Activated CD4-positive, alpha-beta T cell treated with anti-CD3 and anti-CD28 coated beads for 36 hours (primary cell): ENCODE measurements at regions of chr1 and their contacts with region 1.

Region 1: GRCh38 chr1:9910425-9911178 is 533 bp upstream of the CTNNBIP1 start:
- DNase-seq: peak; percentile 100
- ATAC-seq: peak; percentile 96
- H3K4me3 Mint-ChIP-seq: peak overlapping the region; percentile 82
- H3K27ac Mint-ChIP-seq: peak overlapping the region; percentile 92
- H3K4me1 Mint-ChIP-seq: peaks cover 23% of the 10 kb centered on the region
- H3K27me3 Mint-ChIP-seq: no peaks in the 10 kb centered on the region

Region 2: DNA sequence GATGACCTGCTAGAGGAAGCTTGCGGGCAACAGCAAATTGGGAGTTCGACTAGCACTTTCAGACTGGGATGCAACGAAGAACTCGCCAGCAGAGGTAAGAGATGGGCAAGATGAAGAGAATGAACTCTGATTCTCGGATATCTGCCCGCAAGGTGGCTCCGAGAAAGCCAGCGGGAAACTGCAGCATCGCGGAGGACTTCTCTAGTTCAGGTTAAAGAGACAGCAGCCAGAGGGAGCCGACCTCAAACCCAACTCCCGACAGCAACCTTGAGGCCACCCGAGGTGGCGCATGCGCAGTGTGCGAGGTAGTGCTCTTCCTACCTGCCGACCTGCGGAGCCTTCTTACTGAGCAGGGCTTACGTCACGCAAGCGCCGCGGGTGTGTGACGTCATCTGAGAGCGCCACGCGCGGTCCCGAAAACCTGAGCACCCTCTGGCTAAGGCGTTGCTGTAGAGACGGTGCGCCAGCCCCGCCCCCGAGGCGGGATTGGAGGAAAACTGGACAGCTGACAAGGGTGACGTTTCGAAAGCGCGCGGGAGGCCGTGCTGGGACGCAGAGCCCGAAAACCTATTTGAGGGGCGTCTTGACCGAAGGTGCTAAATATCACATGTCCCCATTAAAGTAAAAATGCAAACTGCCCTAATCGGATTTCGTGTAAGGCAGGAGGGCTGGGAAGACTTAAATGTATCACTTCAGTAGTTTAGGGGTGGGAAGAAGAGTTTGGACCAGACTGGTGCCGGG is 481.8 kb before region 1 on chr1:
- CTCF ChIA-PET with region 1: no interaction called
- POLR2A ChIA-PET with region 1: no interaction called
- intact Hi-C with region 1: loop called in 1 of 2 experiments (anchors 1 kb)
- DNase-seq: peak; percentile 100
- ATAC-seq: peak; percentile 91
- H3K4me3 Mint-ChIP-seq: peak overlapping the region; percentile 86
- H3K27ac Mint-ChIP-seq: peak overlapping the region; percentile 98
- H3K4me1 Mint-ChIP-seq: peaks cover 47% of the 10 kb centered on the region
- H3K27me3 Mint-ChIP-seq: no peaks in the 10 kb centered on the region

Region 3: DNA sequence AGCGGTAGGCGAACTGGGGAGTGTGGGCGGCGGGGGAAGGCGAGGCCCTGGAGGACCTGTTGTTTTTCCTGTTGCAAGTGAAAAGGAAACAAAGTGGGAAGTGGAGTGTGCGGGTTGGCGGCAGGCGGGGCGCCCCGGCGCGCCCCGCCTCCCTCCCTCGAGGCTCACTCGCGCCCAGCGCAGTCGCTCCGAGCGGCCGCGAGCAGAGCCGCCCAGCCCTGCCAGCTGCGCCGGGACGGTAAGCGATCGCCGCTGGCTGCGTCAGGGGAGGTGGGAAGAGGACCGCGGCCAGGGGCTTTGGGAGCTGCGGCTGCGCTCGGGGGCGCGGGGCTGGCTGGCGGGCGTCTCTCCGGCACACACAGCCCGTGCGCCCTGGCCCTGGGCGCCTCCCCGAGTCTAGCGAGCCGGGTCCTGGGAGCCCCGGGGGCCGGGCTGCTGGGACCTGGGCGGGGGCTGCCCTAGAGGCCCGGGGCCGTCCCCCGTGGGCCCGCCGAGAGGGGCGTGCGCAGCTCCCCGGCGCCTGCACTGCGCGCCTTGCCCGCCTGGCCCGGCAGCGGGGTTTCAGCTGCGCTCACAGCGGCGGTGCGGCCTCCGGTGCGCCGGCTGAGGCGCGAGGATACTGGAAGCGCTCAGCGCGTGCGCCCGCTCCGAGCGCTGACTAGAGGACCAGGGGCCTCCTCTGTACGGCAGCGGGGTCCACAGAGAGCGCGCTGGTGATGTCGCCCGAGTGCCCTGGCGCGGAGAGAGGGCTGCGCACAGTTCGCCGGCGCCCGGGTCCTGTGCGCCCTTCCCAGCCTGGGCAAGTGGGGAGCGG is 258.8 kb before region 1 on chr1 and contains the start of gene PIK3CD:
- CTCF ChIA-PET with region 1: no interaction called
- POLR2A ChIA-PET with region 1: no interaction called
- intact Hi-C with region 1: loop called in 1 of 2 experiments (anchors 1 kb)
- DNase-seq: peak; percentile 69
- ATAC-seq: peak; percentile 24
- H3K4me3 Mint-ChIP-seq: peak within 1 kb of the TSS; percentile 98
- H3K27ac Mint-ChIP-seq: peak within 1 kb of the TSS; percentile 99
- H3K4me1 Mint-ChIP-seq: peaks cover 51% of the 10 kb centered on the region
- H3K27me3 Mint-ChIP-seq: no peaks in the 10 kb centered on the region
- total RNA-seq, gene PIK3CD: 96.4 to 114 TPM

Region 4: GRCh38 chr1:9874959-9875635 is 35.5 kb before region 1 on chr1:
- CTCF ChIA-PET with region 1: interaction called, 12 read pairs
- POLR2A ChIA-PET with region 1: no interaction called
- intact Hi-C with region 1: loop called (anchors 1 to 5 kb)
- DNase-seq: peak; percentile 86
- ATAC-seq: peak; percentile 96
- H3K4me3 Mint-ChIP-seq: no peak overlapping the region
- H3K27ac Mint-ChIP-seq: no peak overlapping the region
- H3K4me1 Mint-ChIP-seq: peaks cover 3% of the 10 kb centered on the region
- H3K27me3 Mint-ChIP-seq: no peaks in the 10 kb centered on the region

Region 5: DNA sequence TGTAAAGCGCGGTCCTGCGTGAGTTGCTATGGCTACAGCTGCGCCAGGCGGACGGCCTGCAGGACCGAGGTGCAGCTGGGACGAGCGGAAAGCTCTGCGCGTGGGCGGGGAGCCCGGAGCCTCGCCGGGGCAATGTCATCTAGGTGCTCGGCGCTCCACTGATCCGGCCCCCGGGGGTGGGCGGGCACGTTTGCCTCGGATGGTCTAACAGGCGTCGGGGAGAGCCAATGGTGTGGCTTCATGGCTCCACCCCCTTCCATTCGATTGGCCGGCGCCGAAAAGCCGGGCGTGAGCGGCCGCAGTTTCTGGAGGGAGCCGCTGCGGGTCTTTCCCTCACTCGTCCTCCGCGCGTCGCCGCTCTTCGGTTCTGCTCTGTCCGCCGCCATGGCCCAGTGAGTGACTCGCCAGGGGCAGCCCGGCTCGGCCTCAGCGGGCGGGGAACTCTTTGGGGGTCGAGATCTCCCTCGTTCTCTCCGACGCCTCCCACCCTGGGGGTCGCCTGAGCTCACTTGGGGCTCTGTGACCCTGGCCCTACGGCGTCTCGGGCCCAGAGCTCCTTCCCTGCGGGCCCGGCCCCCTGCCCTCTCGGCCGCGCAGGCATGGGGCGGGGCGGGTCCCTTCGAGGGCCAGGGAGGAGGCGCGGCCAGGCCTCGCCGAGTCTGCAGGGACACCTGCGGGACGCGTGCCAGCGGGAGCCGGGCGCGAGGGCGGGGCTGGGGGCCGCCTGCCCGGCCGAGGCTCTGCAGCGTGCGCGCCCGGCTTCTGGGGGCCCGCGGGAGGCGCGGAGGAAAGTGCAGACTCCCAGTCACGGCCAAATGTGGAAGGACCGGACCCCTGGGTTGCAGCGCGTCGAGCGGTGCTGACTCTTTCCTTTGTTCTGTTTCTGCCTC is 488.4 kb after region 1 on chr1 and contains the start of gene PGD:
- CTCF ChIA-PET with region 1: no interaction called
- POLR2A ChIA-PET with region 1: no interaction called
- intact Hi-C with region 1: loop called in 1 of 2 experiments (anchors 1 kb)
- DNase-seq: peak; percentile 99
- ATAC-seq: peak; percentile 97
- H3K4me3 Mint-ChIP-seq: peak within 1 kb of the TSS; percentile 86
- H3K27ac Mint-ChIP-seq: peak within 1 kb of the TSS; percentile 78
- H3K4me1 Mint-ChIP-seq: peaks cover 31% of the 10 kb centered on the region
- H3K27me3 Mint-ChIP-seq: no peaks in the 10 kb centered on the region
- total RNA-seq, gene PGD: 91.6 to 93.7 TPM

Region 6: DNA sequence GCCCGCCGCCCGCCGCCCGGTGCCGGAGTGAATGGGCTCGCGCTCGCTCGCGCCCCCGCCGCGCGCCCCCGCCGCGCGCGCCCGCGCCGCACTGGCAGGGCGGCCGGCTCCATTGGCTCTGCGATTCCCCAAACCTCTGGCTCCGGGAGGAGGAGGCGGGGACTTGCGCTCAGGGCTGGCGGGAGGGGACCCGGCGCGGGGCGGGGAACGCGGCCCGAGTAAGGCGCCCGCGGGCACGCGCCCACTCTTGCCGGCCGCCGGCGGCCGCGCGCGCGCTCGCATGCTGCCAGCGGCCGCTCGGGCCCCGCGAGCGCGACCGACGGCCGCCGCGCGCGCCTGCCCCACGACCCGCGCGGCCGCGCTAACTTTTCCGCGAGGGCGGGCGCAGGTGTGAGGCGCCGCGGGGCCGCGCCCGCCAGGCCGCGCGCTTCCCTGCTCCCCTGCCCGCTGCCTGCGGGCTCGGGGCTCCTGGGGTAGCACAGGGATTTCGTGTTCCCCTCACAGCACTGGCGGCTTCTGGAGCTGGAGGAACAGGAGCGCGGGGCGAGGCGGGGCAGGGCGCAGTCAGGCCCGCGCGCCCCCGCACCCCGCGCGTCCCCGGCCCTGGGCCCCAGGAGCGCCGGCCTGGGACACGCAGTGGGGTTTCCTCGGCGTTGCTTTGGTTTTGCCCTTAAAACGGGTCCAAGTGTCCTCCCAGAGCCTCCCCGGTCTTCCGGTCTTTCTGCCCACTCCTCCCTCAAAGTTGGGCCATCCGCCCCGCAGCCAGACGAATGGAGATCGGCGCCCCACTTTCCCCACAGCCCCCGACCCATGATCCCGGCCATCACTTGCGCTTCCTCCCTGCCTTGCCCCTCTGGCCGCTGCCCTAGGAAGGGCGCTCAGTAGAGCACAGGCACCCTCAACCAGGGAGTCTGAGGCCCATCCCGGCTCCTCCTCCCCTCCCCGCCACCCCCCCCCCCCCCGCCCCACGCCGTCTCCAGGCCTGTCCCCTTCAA is 784.3 kb after region 1 on chr1:
- CTCF ChIA-PET with region 1: interaction called, 3 read pairs
- POLR2A ChIA-PET with region 1: no interaction called
- intact Hi-C with region 1: loop called in 1 of 2 experiments (anchors 2 kb)
- DNase-seq: peak; percentile 83
- ATAC-seq: peak; percentile 55
- H3K4me3 Mint-ChIP-seq: peak overlapping the region; percentile 57
- H3K27ac Mint-ChIP-seq: no peak overlapping the region
- H3K4me1 Mint-ChIP-seq: peaks cover 36% of the 10 kb centered on the region
- H3K27me3 Mint-ChIP-seq: peaks cover 2% of the 10 kb centered on the region